IMR-90 (cell line): ENCODE measurements at regions of chr1 and their contacts with region 1.

Region 1: GRCh38 chr1:204494281-204495077 is at the start of gene PIK3C2B:
- DNase-seq: peak; percentile 73
- ATAC-seq: peak; percentile 92
- H3K4me3 ChIP-seq: peak within 1 kb of the TSS; percentile 72
- H3K27ac ChIP-seq: peak within 1 kb of the TSS; percentile 67
- H3K4me1 ChIP-seq: peaks cover 3% of the 10 kb centered on the region; the same call in 1 of the 2 replicates
- H3K27me3 ChIP-seq: peaks cover 23% of the 10 kb centered on the region; the same call in 1 of the 2 replicates
- CTCF ChIP-seq: peak; percentile 53
- POLR2A ChIP-seq: peak; percentile 26; the same call in 1 of the 2 replicates
- RAD21 ChIP-seq: peak; percentile 50
- total RNA-seq, gene PIK3C2B: 1.1 and 2.8 TPM in 2 replicates

Region 2: DNA sequence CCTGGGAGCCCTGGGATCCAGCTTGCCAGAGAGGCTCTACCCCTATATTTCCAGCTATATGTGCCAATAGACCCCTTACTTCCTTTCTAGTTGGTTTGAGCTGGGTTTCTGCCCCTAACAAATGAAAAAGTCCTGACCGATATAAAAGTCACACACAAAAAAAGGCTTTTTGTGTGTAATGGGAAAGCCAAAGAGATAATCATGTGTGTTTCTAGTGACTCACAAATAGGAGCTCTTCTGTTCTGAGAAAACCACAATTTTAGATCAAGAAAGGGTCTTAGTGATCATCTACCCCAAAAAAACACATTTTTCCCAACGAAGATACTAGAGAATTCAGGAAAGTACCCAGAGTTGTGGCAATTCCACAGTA is 111.8 kb before region 1 on chr1:
- CTCF ChIA-PET with region 1: no interaction called
- POLR2A ChIA-PET with region 1: interaction called, 11 read pairs
- dilution Hi-C with region 1: no loop called
- in situ Hi-C with region 1: no loop called
- intact Hi-C with region 1: no loop called
- DNase-seq: no peak
- ATAC-seq: no peak
- H3K4me3 ChIP-seq: no peak overlapping the region
- H3K27ac ChIP-seq: no peak overlapping the region
- H3K4me1 ChIP-seq: peaks cover 3% of the 10 kb centered on the region; the same call in 1 of the 2 replicates
- H3K27me3 ChIP-seq: peaks cover 58% of the 10 kb centered on the region
- CTCF ChIP-seq: no peak
- POLR2A ChIP-seq: no peak
- RAD21 ChIP-seq: no peak

Region 3: GRCh38 chr1:204431310-204432165 is 62.9 kb before region 1 on chr1:
- CTCF ChIA-PET with region 1: interaction called, 17 read pairs
- POLR2A ChIA-PET with region 1: no interaction called
- dilution Hi-C with region 1: no loop called
- in situ Hi-C with region 1: no loop called
- intact Hi-C with region 1: no loop called
- DNase-seq: peak; percentile 82
- ATAC-seq: peak; percentile 94
- H3K4me3 ChIP-seq: no peak overlapping the region
- H3K27ac ChIP-seq: no peak overlapping the region
- H3K4me1 ChIP-seq: peaks cover 3% of the 10 kb centered on the region; the same call in 1 of the 2 replicates
- H3K27me3 ChIP-seq: no peaks in the 10 kb centered on the region
- CTCF ChIP-seq: peak; percentile 78
- POLR2A ChIP-seq: no peak
- RAD21 ChIP-seq: peak; percentile 69

Region 4: GRCh38 chr1:204446370-204447111 is 47.9 kb before region 1 on chr1:
- CTCF ChIA-PET with region 1: interaction called, 30 read pairs
- POLR2A ChIA-PET with region 1: no interaction called
- dilution Hi-C with region 1: no loop called
- in situ Hi-C with region 1: no loop called
- intact Hi-C with region 1: no loop called
- DNase-seq: peak; percentile 62
- ATAC-seq: peak; percentile 96
- H3K4me3 ChIP-seq: no peak overlapping the region
- H3K27ac ChIP-seq: no peak overlapping the region
- H3K4me1 ChIP-seq: no peaks in the 10 kb centered on the region
- H3K27me3 ChIP-seq: no peaks in the 10 kb centered on the region
- CTCF ChIP-seq: peak; percentile 84
- POLR2A ChIP-seq: no peak
- RAD21 ChIP-seq: peak; percentile 83

Region 5: GRCh38 chr1:204506961-204507387 is 12.5 kb after region 1 on chr1:
- CTCF ChIA-PET with region 1: interaction called, 11 read pairs
- POLR2A ChIA-PET with region 1: no interaction called
- dilution Hi-C with region 1: no loop called
- in situ Hi-C with region 1: no loop called
- intact Hi-C with region 1: no loop called
- DNase-seq: peak; percentile 92
- ATAC-seq: peak; percentile 89
- H3K4me3 ChIP-seq: peak overlapping the region; percentile 48
- H3K27ac ChIP-seq: peak overlapping the region; percentile 49
- H3K4me1 ChIP-seq: no peaks in the 10 kb centered on the region
- H3K27me3 ChIP-seq: no peaks in the 10 kb centered on the region
- CTCF ChIP-seq: no peak
- POLR2A ChIP-seq: no peak; the same call in 1 of the 2 replicates
- RAD21 ChIP-seq: no peak